ENCODE measurements at regions of chr2 and their contacts with region 1.

Region 1: GRCh38 chr2:24084386-24085361 is at the start of gene TP53I3:
- DNase-seq: peak; percentile 62 to 98 (median 80)

Region 2: GRCh38 chr2:23824777-23825212 is 259.9 kb before region 1 on chr2:
- intact Hi-C with region 1: loop called (anchors 1 kb)
- DNase-seq: no peak

Region 3: GRCh38 chr2:24123195-24123921 is 38.7 kb after region 1 on chr2 and contains the starts of genes FAM228B and PFN4:
- intact Hi-C with region 1: loop called (anchors 2 kb)
- DNase-seq: peak; percentile 79 to 98 (median 88)

Measured in posterior cingulate gyrus (tissue), 11 donors.